ENCODE measurements at regions of chr5 and their contacts with region 1.

Region 1: DNA sequence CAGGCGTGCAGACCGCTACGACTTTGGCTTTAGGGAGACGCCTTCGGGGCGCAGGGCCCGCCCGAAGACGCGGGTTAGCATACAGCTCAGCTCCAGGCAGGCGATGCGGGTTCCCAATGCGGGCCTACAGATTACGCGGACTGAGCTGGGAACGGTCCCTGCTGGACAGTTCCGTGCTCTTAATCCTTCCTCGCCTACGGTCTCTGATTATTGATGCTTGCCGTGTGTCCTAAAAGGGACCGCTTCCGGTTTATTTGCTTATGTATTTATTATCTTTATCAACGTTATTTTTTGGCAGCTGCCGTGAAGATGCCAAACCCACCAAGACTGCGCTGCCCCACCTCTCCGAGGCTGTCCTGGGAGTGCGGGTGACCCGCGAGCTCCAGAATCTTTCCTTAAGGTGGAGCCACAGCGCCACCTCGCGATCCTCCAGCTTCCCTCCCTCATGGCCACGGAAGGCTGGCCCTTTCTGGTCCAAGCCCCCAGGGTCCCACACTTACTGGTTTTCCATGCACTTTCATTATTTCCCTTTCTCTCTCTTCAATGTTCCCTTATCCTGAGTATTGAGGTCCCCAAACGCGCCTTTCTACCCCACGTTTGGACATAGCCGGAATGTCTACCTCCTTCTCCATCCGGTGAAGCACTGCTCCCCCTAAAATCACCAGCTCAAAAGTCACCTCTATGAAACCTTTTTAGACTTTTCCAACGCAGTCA is 7.0 kb upstream of the EBF1 start:
- DNase-seq: no peak
- H3K4me3 ChIP-seq: no peak overlapping the region
- H3K27ac ChIP-seq: no peak overlapping the region
- H3K4me1 ChIP-seq: no peaks in the 10 kb centered on the region
- H3K27me3 ChIP-seq: peaks cover 15% of the 10 kb centered on the region
- CTCF ChIP-seq: peak; percentile 61 to 84 (median 76)
- POLR2A ChIP-seq: no peak

Region 2: GRCh38 chr5:158174918-158175851 is 931.5 kb before region 1 on chr5:
- intact Hi-C with region 1: loop called (anchors 1 kb)
- DNase-seq: peak; percentile 55
- H3K4me3 ChIP-seq: no peak overlapping the region
- H3K27ac ChIP-seq: peak overlapping the region in 1 of 2 donors; percentile 33
- H3K4me1 ChIP-seq: peaks cover 4% of the 10 kb centered on the region
- H3K27me3 ChIP-seq: no peaks in the 10 kb centered on the region
- CTCF ChIP-seq: peak; percentile 19 to 70 (median 61)
- POLR2A ChIP-seq: no peak

Region 3: DNA sequence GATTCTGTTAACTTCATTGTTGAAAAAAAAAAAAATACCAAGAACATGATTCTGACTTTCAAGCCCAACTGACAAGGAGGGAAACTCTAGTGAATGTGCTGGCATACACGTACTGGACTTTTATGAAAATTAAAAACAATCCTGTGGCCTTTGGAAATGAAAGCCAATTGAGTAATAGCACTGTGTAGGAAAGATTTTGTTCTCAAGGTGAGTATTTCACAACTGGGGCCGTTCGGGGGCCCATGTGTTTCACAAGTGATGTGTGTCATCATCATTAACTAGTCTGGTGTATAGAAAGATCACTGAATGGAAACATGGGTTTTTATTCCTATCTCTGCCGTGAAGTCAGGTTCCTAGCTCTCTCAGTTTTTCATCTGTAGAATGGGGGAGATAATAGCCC is 642.8 kb before region 1 on chr5:
- intact Hi-C with region 1: loop called (anchors 10 kb)
- DNase-seq: no peak
- H3K4me3 ChIP-seq: no peak overlapping the region
- H3K27ac ChIP-seq: no peak overlapping the region
- H3K4me1 ChIP-seq: no peaks in the 10 kb centered on the region
- H3K27me3 ChIP-seq: no peaks in the 10 kb centered on the region
- CTCF ChIP-seq: no peak
- POLR2A ChIP-seq: no peak

Region 4: DNA sequence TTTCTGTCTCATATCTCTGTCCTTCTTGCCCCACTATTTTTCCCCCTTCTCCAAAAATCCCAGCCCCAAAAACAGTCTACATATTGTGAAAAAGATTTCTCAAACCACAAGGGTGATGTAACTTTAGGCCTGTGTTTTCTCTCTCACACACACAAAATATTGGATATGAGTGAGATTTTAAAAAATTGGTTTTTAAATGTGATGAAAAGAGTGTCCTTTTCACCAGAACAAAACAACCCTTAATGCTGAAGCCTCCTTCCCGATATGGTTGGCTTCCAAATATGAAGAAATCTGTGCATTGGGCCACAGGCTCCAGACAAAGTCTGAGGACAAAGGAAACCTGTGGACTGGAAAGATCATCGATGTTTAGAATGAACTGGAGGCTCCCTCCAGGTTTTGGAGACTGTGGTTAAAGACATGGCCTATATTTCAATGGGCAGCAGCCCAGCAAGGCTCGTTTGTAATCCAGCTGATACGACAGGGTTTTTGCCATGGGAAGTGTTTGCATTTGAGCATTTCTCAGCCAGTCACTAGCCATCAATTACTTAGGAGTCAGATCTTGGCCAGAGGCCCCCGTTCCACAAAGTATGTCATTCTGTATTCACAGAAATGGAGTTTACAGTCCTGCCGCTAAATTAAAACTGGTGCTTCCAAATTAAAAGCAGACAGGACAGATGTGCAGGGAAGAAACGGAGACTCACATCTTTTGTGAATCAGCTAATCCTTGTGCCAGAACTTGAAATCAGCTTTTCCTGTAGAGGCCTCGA is 553.3 kb before region 1 on chr5:
- intact Hi-C with region 1: no loop called
- DNase-seq: no peak
- H3K4me3 ChIP-seq: no peak overlapping the region
- H3K27ac ChIP-seq: no peak overlapping the region
- H3K4me1 ChIP-seq: no peaks in the 10 kb centered on the region
- H3K27me3 ChIP-seq: no peaks in the 10 kb centered on the region
- CTCF ChIP-seq: no peak
- POLR2A ChIP-seq: no peak

Region 5: GRCh38 chr5:158739951-158740757 is 366.6 kb before region 1 on chr5:
- intact Hi-C with region 1: loop called (anchors 2 kb)
- DNase-seq: no peak
- H3K4me3 ChIP-seq: no peak overlapping the region
- H3K27ac ChIP-seq: no peak overlapping the region
- H3K4me1 ChIP-seq: no peaks in the 10 kb centered on the region
- H3K27me3 ChIP-seq: peaks cover 1% of the 10 kb centered on the region
- CTCF ChIP-seq: peak in 1 of 4 experiments; percentile 34
- POLR2A ChIP-seq: no peak